Ascending aorta (tissue), 2 donors: ENCODE measurements at regions of chr6 and their contacts with region 1.

Region 1: DNA sequence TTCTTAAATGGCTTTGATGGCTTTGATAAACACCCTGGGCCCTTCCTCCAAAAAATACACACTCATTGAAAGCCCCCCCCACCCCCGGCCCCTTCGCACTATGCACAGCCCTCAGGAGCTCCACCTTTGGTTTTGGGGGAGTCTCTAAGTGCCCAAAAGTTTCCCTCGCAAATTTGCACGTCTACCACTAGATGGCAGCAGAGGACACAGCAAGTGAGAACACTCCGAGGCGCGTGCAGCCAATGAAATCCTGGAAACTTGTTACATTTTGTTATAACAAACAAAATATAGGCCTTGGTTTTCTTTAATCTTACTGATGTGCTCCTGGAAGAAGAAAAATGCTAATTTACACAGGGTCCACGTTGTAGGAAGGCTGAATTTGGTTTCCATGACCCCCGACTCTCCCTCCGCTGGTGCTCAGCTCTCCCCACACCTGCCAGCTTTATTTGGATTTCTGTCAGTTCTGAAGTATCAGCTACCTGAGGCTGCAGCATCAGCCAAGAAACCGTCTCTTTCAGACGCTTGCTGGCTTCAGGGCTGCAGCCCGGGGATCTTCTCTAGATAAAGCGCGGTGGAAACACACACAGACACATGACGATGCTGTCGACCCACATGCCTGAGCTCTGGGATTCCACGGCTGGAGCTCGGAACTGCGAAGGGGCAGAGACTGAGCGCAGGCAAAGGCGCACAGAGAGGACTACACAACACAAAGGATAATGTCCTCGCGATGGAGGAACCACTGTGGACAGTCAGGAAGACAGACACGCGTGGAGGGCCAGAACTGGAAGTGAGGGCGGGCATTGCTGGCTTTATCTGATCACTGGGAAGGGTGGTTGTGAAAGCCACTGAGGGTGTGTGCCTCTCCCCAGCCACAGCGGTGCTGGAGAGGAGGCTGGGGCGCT is 148.4 kb upstream of the RPS6KA2 start:
- DNase-seq: no peak
- H3K4me3 ChIP-seq: no peak overlapping the region
- H3K27ac ChIP-seq: no peak overlapping the region
- H3K4me1 ChIP-seq: no peaks in the 10 kb centered on the region
- H3K27me3 ChIP-seq: no peaks in the 10 kb centered on the region
- CTCF ChIP-seq: peak; percentile 35 to 88 (median 87)

Region 2: DNA sequence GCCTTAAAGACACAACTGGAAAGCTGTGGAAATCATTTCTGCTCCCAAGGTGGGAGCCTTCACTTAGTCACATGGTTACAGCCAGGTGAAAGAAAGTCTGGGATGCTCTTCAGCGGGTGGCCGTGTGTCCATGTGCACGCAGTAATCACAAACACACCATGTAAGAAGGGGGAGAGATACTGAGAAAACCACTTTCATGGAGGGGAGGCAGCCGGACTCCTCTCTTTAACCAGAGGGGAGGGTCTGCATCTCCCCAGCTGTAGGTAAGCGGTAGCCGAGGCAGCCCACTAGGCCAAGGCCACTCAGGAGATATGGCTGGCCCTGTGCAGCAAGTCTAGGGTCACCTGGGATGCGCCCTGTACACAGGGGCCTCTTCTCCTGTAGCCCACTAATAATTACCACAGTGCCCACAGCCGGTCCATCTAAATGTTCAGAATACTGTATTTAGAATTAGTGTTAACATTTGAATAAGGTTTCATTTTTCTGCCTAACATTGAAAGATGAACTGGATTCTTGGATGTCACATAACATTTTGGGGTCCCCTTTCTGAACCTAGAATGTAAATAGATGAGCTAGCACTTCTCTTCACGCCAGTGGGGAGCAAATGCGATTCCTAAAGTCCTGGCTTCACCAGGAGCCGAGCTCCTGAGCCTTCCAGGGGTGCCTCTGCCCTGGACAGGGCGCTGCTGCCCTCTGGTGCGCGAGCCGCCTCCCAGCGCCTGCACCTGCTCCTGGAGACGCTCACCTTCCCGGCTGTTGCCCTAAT is 366.4 kb after region 1 on chr6:
- intact Hi-C with region 1: loop called (anchors 10 kb)
- DNase-seq: no peak
- H3K4me3 ChIP-seq: no peak overlapping the region
- H3K27ac ChIP-seq: no peak overlapping the region
- H3K4me1 ChIP-seq: no peaks in the 10 kb centered on the region
- H3K27me3 ChIP-seq: no peaks in the 10 kb centered on the region
- CTCF ChIP-seq: peak; percentile 35 to 43 (median 36)

Region 3: DNA sequence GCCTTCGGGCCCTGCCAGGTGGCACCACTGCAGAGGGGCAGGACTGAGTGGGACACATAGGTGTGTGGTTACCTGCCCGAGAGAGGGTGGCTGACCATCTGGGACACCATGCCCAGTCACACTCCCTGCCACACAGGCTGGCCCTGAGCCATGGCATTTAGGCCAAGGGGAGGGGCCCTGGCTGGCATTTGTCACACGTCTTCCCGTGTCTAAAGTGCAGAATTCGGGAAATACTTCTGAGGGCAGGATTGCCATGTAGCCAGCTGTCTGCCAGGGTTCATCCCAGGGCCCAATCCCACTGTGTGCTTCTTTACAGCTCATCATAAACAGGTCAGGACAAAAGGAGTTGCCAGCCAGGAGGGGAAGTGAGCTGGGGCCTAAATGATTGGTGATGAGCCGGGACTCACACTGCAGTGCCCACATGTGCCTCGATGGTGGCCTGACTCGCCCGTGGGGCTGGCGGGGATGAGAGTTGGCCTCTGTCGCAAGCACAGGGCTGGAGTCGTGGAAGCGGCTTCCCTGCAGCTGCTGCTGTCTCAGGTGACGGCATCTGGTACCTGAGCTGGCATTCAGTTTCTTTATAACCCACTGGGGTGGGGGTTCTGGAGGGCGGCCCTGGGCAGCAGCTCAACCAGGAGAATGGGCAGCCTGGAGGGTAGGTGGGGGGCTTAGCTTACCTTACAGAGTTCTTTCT is 509.8 kb after region 1 on chr6:
- intact Hi-C with region 1: loop called (anchors 10 kb)
- DNase-seq: no peak
- H3K4me3 ChIP-seq: no peak overlapping the region
- H3K27ac ChIP-seq: no peak overlapping the region
- H3K4me1 ChIP-seq: no peaks in the 10 kb centered on the region
- H3K27me3 ChIP-seq: no peaks in the 10 kb centered on the region
- CTCF ChIP-seq: no peak